HAP-1 (cell line): ENCODE measurements at regions of chr1 and their contacts with region 1.

Region 1: GRCh38 chr1:70142075-70142474 is 63.3 kb downstream of the LRRC40 start:
- DNase-seq: no peak
- H3K4me3 ChIP-seq: no peak overlapping the region
- H3K4me1 ChIP-seq: peaks cover 13% of the 10 kb centered on the region; the same call in 1 of the 2 replicates
- H3K27me3 ChIP-seq: no peaks in the 10 kb centered on the region

Region 2: DNA sequence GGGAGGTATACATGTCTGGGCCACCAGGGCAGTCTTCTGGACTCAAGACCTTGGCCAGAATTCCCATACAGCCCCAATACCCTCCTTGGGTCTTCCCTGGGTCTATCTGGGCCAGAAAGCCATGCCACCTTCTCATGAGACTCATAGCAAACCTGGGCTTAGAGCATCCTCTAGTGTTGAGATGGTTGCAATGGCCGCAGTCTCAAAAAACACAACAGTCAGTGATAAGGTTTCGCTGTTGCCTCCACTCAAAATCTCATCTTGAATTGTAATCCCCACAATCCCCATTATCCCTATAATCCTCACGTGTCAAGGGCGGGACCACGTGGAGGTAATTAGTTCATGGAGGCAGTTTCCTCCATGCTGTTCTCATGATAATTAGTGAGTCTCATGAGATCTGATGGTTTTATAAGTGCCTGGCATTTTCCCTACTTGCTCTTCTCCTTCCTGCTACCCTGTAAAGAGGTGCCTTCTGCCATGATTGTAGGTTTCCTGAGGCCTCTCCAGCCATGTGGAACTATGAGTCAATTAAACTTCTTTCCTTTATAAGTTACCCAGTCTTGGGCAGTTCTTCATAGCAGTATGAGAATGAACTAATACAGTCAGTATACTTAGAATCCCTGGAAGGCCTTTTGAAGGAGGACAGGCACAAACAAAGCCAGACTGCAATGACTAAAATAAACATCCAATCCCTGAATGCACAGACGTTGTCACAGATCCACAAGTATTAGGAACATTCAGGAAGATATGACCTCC is 346.0 kb after region 1 on chr1:
- in situ Hi-C with region 1: loop called (anchors 25 kb)
- DNase-seq: peak; percentile 71 to 72
- H3K4me3 ChIP-seq: no peak overlapping the region
- H3K4me1 ChIP-seq: peaks cover 5% of the 10 kb centered on the region
- H3K27me3 ChIP-seq: no peaks in the 10 kb centered on the region